ENCODE measurements at regions of chr17 and their contacts with region 1.

Region 1: DNA sequence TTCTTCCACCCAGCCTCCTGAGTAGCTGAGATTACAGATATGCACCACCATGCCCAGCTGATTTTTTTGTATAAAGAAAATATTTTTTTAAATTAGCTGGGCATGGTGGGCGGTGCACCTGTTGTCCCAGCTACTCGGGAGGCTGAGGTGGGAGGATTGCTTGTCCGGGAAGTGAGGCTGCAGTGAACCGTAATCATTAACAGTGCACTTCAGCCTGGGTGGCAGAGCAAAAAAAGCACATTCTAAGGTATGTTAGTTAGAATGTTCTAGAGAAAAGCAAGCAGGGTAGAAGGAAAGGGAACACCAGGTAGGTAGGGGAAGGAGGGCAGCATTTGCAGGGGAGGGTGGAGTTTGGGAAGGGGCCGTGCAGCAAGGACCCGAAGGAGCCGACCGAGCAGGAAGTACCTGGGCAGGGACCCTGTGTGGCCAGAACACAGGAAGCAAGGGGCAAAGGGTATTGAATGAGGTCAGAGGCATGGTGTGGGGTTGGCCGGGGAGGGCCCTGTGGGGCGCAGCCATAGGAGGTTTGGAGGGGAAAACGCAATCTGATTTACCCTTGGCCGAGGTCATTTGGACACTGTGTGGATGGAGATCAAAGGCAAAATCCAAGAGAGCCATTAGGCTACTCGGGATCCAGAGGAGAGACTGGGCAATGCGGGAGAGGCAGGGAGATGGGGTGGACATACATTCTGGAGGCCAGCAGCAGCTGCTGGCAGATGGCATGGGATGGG is 2.3 kb downstream of the C17orf99 start:
- DNase-seq: no peak
- H3K4me3 ChIP-seq: no peak overlapping the region
- H3K27ac ChIP-seq: no peak overlapping the region
- H3K4me1 ChIP-seq: peaks cover 29% of the 10 kb centered on the region
- H3K27me3 ChIP-seq: no peaks in the 10 kb centered on the region
- CTCF ChIP-seq: no peak

Region 2: DNA sequence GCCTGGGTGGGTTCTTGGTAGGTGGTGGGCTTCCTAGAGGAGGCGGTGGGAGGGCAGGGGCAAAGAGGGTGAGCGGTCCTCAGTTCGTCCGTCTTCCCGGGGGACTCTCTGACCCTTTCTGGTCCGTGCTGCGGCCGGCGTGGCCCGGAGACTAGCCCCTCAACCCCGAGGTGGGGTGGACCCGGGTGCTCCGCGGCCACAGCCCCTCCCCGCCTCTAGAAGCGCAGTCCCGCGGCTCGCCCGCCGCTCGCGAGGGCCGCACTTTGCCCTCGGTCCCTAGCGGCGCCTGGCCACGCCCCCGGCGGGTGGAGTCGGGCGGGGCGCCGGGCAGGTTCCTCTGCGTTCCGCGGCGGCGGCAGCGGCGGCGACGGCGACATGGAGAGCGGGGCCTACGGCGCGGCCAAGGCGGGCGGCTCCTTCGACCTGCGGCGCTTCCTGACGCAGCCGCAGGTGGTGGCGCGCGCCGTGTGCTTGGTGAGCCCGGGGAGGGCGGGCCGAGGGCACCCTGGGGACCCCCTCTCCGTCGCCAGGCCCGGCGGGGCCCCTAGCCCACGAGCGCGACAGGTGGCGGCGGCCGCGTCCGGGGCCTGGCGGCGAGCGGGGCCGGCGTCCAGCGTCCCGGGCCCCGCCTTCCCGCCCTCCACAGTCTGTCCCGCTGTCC is 19.9 kb after region 1 on chr17 and contains the start of gene SYNGR2:
- CTCF ChIA-PET with region 1: interaction called, 11 read pairs
- POLR2A ChIA-PET with region 1: no interaction called
- intact Hi-C with region 1: no loop called
- DNase-seq: peak; percentile 55 to 89
- H3K4me3 ChIP-seq: peak within 1 kb of the TSS; percentile 67
- H3K27ac ChIP-seq: no peak within 1 kb of the TSS
- H3K4me1 ChIP-seq: peaks cover 10% of the 10 kb centered on the region; the same call in 1 of the 2 replicates
- H3K27me3 ChIP-seq: no peaks in the 10 kb centered on the region
- CTCF ChIP-seq: no peak
- total RNA-seq, gene SYNGR2: 91.9 and 95.0 TPM in 2 replicates